BJ (cell line): ENCODE measurements at regions of chr7 and their contacts with region 1.

Region 1: GRCh38 chr7:114889646-114890285 is 32.1 kb upstream of the MDFIC start:
- DNase-seq: peak; percentile 92
- H3K4me3 ChIP-seq: no peak overlapping the region
- H3K27me3 ChIP-seq: no peaks in the 10 kb centered on the region
- CTCF ChIP-seq: no peak

Region 2: GRCh38 chr7:114922016-114922651 is 32.4 kb after region 1 on chr7 and contains the start of gene MDFIC:
- CTCF ChIA-PET with region 1: no interaction called
- POLR2A ChIA-PET with region 1: interaction called, 10 read pairs
- DNase-seq: no peak
- H3K4me3 ChIP-seq: peak within 1 kb of the TSS; percentile 85
- H3K27me3 ChIP-seq: no peaks in the 10 kb centered on the region
- CTCF ChIP-seq: 0 out of 2 replicates have a peak, but pooled peaks have one; percentile 2
- polyA plus RNA-seq, gene MDFIC: 30.5 and 49.5 TPM in 2 replicates